PC-3 (cell line): ENCODE measurements at regions of chr4 and their contacts with region 1.

Region 1: GRCh38 chr4:71526626-71527406 is 188.0 kb downstream of the SLC4A4 start:
- DNase-seq: peak; percentile 33
- ATAC-seq: peak; percentile 62; the same call in 1 of the 2 replicates
- H3K4me3 ChIP-seq: no peak overlapping the region
- H3K27ac ChIP-seq: no peak overlapping the region
- H3K4me1 ChIP-seq: no peaks in the 10 kb centered on the region
- H3K27me3 ChIP-seq: no peaks in the 10 kb centered on the region
- CTCF ChIP-seq: peak; percentile 52; the same call in 1 of the 2 replicates

Region 2: DNA sequence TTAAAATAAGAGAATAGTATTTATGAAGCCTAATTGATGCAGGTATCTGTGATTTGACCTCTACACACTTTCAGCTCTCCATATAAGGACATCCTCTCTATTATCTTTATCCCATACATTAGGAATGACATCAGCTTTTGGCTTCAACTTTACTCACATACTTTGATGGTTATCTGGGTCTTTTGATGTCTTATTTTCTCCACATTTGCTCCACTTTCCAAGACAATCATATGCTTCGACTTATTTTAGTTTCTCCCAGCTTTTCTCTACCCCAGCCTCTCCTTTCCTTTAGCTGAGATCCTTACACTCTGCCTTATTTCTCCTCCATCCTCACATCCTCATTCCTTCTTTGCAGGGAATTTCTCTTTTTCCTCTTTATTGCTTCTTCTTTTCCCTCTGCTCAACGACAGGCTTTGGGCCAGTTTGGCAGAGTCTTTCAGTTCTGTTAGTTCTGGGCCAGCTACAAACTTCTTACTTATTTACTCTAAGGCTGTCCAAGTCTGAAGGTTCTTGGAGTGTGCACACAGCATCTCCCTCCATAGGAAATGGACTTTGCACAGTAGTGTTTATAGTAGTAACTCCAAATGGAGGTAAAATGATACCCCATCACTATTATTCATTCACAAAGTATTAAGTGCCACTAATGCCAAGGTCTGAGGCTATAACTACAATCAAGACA is 137.5 kb before region 1 on chr4:
- CTCF ChIA-PET with region 1: no interaction called
- POLR2A ChIA-PET with region 1: no interaction called
- intact Hi-C with region 1: loop called (anchors 10 kb)
- DNase-seq: peak; percentile 70
- ATAC-seq: peak; percentile 98
- H3K4me3 ChIP-seq: peak overlapping the region; percentile 6; the same call in 1 of the 2 replicates
- H3K27ac ChIP-seq: peak overlapping the region; percentile 14; the same call in 1 of the 2 replicates
- H3K4me1 ChIP-seq: peaks cover 19% of the 10 kb centered on the region
- H3K27me3 ChIP-seq: no peaks in the 10 kb centered on the region
- CTCF ChIP-seq: no peak